AG04450 (cell line): ENCODE measurements at regions of chr1 and their contacts with region 1.

Region 1: DNA sequence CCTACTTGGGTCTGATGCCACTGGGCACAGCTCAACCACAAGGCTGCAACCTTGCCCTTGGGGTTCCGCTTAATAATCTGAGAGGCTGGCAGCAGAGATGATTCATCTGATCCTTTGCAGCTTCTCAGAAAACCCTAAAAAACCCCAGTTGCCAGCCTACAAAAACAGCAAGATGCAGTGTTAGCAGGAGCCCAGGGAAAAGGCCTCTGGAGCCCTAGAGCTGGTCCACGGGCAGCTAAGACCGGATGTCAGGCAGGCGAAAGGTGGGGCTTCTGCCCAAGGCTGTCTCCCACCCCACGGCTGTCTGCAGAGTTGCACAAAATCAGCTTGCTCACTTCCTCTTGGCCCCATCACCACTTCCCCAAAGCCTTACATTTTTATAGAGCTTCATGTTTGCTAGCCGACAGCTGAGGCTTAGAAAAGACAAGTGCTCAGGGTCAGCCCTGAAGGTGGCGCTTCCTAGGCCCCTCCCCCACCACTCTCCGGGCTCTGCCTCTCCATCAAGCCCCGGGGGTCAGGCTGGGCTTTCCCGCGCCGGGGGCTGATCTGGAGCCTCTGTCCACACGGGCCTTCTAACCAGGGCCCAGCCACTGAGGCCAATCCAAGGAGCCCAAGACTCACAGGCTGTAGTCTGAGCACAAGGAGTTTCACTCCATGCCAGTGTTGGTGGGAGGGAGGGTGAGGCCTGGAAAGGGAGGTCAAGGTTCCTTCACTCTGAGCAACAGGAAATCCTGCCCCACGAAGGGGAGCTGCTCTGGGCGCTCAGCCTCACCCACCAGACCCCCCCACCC is 4.2 kb upstream of the ADORA3 start:
- DNase-seq: peak; percentile 32
- H3K4me3 ChIP-seq: peak overlapping the region; percentile 41
- H3K27ac ChIP-seq: peak overlapping the region; percentile 91
- H3K27me3 ChIP-seq: peaks cover 4% of the 10 kb centered on the region
- CTCF ChIP-seq: peak; percentile 28; the same call in 1 of the 2 replicates

Region 2: GRCh38 chr1:110053557-110054428 is 1453.8 kb before region 1 on chr1:
- CTCF ChIA-PET with region 1: no interaction called
- POLR2A ChIA-PET with region 1: no interaction called
- DNase-seq: no peak
- H3K4me3 ChIP-seq: no peak overlapping the region
- H3K27ac ChIP-seq: no peak overlapping the region
- H3K27me3 ChIP-seq: no peaks in the 10 kb centered on the region
- CTCF ChIP-seq: peak; percentile 98

Region 3: DNA sequence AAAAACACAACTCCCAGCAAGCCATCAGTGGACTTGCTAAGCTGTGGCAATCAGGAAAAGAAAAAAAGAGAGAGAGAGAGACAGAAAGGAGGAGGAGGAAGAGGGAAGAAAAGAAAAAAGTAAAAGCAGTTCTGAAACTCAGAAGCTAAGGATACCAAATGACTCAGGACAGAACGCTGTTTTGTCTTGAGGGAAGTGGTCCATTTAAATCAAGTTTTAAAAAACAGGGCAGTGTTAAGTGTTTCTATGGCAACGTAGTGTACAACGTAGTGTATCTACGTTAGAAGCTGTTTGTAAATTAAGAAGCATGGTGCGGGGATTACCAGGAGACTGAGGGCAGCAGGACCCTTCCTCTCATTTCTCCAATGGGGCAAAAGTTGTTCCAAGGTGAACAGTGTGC is 10.0 kb before region 1 on chr1:
- CTCF ChIA-PET with region 1: interaction called, 72 read pairs
- POLR2A ChIA-PET with region 1: no interaction called
- DNase-seq: no peak
- H3K4me3 ChIP-seq: no peak overlapping the region
- H3K27ac ChIP-seq: no peak overlapping the region
- H3K27me3 ChIP-seq: peaks cover 27% of the 10 kb centered on the region
- CTCF ChIP-seq: no peak

Region 4: DNA sequence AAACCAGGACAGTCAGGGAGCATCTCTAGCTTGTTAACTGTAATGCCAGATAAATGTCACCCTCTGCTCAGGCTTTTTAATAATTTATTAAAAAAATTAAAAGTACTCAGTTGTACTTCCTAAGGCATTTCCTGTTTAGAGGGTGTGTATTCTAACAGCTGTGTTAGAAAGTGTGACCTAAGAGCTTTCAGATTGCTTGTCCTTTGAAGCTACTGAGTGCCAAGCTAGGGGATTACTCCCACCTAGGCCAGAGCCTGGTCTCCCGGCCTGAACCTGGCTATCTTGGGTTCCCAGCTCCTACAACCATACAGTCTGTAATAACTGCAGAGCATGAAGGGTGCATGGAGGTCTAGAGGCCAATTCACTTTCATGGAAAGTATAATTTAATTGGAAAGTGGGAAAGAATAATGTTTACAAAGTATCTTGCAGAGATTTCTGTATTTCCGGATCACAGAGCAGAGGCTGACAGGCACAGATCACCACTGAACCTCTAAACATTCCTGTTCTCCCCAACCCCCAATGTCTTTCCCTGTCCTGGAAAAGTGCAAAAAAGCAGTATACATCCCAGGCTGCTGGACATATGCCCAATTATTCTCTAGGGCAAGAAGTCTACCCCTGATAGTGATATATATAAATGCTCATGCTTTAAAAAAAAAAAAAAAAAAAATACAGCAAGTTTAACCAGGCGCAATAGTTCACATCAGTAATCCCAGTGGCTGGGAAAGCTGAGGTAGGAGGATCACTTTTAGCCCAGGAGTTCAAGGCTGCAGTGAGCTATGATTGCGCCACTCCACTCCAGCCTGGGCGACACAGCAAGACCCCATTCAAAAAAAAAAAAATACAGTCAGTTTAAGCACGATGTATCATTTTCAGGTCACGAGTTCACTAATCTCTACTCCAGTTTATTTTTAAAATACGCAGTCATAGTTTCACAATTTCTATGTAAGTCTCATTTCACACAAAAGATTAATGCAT is 75.3 kb after region 1 on chr1:
- CTCF ChIA-PET with region 1: interaction called, 12 read pairs
- POLR2A ChIA-PET with region 1: interaction called, 5 read pairs
- DNase-seq: no peak
- H3K4me3 ChIP-seq: no peak overlapping the region
- H3K27ac ChIP-seq: no peak overlapping the region
- H3K27me3 ChIP-seq: no peaks in the 10 kb centered on the region
- CTCF ChIP-seq: no peak

Region 5: GRCh38 chr1:111648806-111649205 is 141.2 kb after region 1 on chr1:
- CTCF ChIA-PET with region 1: interaction called, 23 read pairs
- POLR2A ChIA-PET with region 1: no interaction called
- DNase-seq: no peak
- H3K4me3 ChIP-seq: no peak overlapping the region
- H3K27ac ChIP-seq: no peak overlapping the region
- H3K27me3 ChIP-seq: no peaks in the 10 kb centered on the region
- CTCF ChIP-seq: no peak

Region 6: DNA sequence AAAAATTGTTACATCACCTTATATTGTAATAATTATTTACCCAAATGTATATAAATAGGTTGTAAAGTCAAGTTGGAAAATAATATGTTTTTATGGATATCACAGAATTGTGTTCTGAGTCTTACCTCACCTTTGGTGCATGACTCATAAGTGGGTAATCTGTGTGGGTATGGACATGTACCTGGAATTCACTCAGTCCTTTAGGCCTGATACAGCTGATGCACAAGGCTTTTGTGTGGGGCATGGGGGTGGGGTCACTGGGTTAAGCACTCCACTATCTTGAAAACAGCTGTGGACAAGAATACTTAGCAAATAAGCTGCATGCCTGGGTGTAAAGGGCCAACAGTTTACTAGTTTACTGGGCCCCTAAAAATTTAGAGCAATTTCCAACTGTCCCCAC is 197.2 kb after region 1 on chr1:
- CTCF ChIA-PET with region 1: interaction called, 18 read pairs
- POLR2A ChIA-PET with region 1: no interaction called
- DNase-seq: no peak
- H3K4me3 ChIP-seq: no peak overlapping the region
- H3K27ac ChIP-seq: no peak overlapping the region
- H3K27me3 ChIP-seq: no peaks in the 10 kb centered on the region
- CTCF ChIP-seq: no peak

Region 7: DNA sequence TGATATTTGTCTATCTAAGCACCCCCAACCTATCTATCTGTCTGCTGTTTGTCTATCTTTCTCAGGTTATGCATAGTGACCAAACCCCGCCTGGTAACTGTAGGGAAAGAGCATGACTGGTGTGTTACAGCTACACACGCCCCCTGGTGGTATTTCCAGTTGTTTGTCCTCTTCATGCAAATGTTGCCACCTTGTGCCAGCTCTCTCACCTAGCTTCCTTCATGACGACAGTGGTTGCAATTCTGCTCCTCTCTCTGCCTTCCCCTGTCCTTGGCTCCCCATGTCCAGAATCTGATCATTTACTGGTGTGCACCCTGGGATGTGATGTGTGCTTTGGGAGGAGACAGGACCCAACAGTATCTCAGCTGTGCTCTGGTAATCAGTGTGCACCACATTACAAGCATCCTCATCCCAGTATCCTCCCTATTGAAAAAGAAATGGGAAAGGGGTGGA is 239.7 kb after region 1 on chr1:
- CTCF ChIA-PET with region 1: interaction called, 23 read pairs
- POLR2A ChIA-PET with region 1: no interaction called
- DNase-seq: no peak
- H3K4me3 ChIP-seq: no peak overlapping the region
- H3K27ac ChIP-seq: no peak overlapping the region
- H3K27me3 ChIP-seq: no peaks in the 10 kb centered on the region
- CTCF ChIP-seq: peak; percentile 74